Activated naive CD4-positive, alpha-beta T cell treated with anti-CD3 and anti-CD28 coated beads for 36 hours (primary cell): ENCODE measurements at regions of chr1 and their contacts with region 1.

Region 1: DNA sequence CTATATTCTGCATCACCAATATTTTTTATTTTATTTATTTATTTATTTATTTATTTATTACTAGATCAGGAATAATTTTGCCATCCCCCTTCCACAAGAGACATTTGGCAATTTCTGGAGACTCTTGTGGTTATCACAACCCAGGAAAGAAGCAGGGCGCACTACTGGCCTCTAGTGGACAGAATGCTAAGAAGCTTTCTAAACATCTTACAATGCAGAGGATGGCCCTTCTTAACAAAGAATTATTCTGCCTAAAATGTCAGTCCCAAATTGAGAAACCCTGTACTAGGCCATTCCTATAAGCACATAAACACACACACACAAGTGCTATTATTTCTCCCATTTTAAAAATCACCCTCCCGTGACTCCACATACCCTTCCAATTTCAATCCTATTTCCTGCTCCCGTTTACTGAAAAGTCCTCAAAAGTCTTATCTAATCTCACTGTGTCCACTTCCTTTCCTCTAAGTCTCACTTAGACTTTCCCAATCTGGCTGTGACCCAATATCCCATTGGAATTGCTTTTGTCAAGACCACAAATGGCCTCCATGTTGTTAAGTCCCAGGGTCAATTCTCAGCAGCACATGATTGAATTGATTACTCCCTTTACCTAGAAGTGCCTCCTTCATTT is 43.7 kb upstream of the RNF11 start:
- DNase-seq: peak; percentile 75
- H3K4me3 Mint-ChIP-seq: no peak overlapping the region
- H3K27ac Mint-ChIP-seq: no peak overlapping the region
- H3K4me1 Mint-ChIP-seq: no peaks in the 10 kb centered on the region
- H3K27me3 Mint-ChIP-seq: no peaks in the 10 kb centered on the region

Region 2: DNA sequence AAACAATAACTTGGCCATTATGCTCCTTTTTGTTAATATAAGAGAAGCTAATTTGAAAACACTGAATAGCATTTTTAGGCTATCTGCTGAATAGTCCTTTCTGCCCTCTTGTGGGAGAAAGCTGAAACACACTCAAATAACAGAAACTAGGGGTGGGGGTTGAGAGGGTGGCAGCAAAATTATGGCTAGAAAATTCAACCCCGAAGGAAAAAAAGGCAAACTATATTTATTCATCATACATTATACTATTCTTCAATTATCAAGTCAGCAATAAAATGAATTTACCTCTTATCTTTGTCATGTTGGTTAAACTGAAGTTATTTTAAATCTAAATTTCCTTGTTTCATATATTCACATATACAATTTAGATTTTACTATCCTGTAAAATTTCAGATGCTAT is 488.2 kb before region 1 on chr1:
- CTCF ChIA-PET with region 1: no interaction called
- intact Hi-C with region 1: loop called (anchors 1 kb)
- DNase-seq: no peak
- H3K4me3 Mint-ChIP-seq: no peak overlapping the region
- H3K27ac Mint-ChIP-seq: no peak overlapping the region
- H3K4me1 Mint-ChIP-seq: no peaks in the 10 kb centered on the region
- H3K27me3 Mint-ChIP-seq: no peaks in the 10 kb centered on the region

Region 3: GRCh38 chr1:50873458-50874187 is 318.7 kb before region 1 on chr1:
- CTCF ChIA-PET with region 1: interaction called, 13 read pairs
- intact Hi-C with region 1: loop called (anchors 1 kb)
- DNase-seq: peak; percentile 82
- H3K4me3 Mint-ChIP-seq: no peak overlapping the region
- H3K27ac Mint-ChIP-seq: no peak overlapping the region
- H3K4me1 Mint-ChIP-seq: peaks cover 8% of the 10 kb centered on the region
- H3K27me3 Mint-ChIP-seq: no peaks in the 10 kb centered on the region

Region 4: GRCh38 chr1:50978144-50978851 is 214.0 kb before region 1 on chr1:
- CTCF ChIA-PET with region 1: no interaction called
- intact Hi-C with region 1: loop called (anchors 5 kb)
- DNase-seq: peak; percentile 27
- H3K4me3 Mint-ChIP-seq: peak overlapping the region; percentile 62
- H3K27ac Mint-ChIP-seq: no peak overlapping the region
- H3K4me1 Mint-ChIP-seq: peaks cover 18% of the 10 kb centered on the region
- H3K27me3 Mint-ChIP-seq: peaks cover 38% of the 10 kb centered on the region

Region 5: GRCh38 chr1:51175278-51175677 is 17.1 kb before region 1 on chr1:
- CTCF ChIA-PET with region 1: interaction called, 29 read pairs
- intact Hi-C with region 1: no loop called
- DNase-seq: no peak
- H3K4me3 Mint-ChIP-seq: no peak overlapping the region
- H3K27ac Mint-ChIP-seq: no peak overlapping the region
- H3K4me1 Mint-ChIP-seq: peaks cover 2% of the 10 kb centered on the region
- H3K27me3 Mint-ChIP-seq: peaks cover 12% of the 10 kb centered on the region

Region 6: GRCh38 chr1:51296383-51297357 is 104.3 kb after region 1 on chr1:
- CTCF ChIA-PET with region 1: interaction called, 23 read pairs
- intact Hi-C with region 1: loop called (anchors 2 kb)
- DNase-seq: peak; percentile 86
- H3K4me3 Mint-ChIP-seq: peak overlapping the region; percentile 63
- H3K27ac Mint-ChIP-seq: no peak overlapping the region
- H3K4me1 Mint-ChIP-seq: peaks cover 6% of the 10 kb centered on the region
- H3K27me3 Mint-ChIP-seq: no peaks in the 10 kb centered on the region

Region 7: GRCh38 chr1:52159033-52159789 is 966.9 kb after region 1 on chr1:
- CTCF ChIA-PET with region 1: no interaction called
- intact Hi-C with region 1: no loop called
- DNase-seq: no peak
- H3K4me3 Mint-ChIP-seq: no peak overlapping the region
- H3K27ac Mint-ChIP-seq: no peak overlapping the region
- H3K4me1 Mint-ChIP-seq: peaks cover 4% of the 10 kb centered on the region
- H3K27me3 Mint-ChIP-seq: no peaks in the 10 kb centered on the region